Left ventricle myocardium superior (tissue), 1 donor: ENCODE measurements at regions of chr5 and their contacts with region 1.

Region 1: GRCh38 chr5:96595300-96596090 is 66.7 kb upstream of the CAST start:
- DNase-seq: no peak
- ATAC-seq: no peak

Region 2: GRCh38 chr5:96344678-96345577 is 250.6 kb before region 1 on chr5:
- intact Hi-C with region 1: loop called (anchors 5 kb)
- DNase-seq: no peak
- ATAC-seq: peak; percentile 89

Region 3: DNA sequence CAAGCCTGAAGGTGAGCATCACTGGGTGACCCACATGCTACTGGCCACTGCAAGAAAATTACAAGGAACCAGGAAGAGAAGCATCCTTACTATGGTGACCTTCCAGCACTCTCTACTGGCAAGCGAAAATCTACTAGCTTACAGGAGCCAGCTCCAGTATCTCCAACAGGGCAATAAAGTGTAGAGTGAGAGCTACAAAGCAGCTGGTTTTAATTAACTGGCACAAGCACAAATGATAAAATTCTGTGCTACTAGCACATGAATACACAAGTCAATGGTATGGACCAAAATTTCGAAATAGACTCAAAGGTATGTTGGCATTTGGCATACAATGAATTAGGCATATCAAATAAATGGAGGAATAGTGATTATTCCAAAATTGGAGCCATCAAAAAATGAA is 46.5 kb before region 1 on chr5:
- intact Hi-C with region 1: no loop called
- DNase-seq: no peak
- ATAC-seq: no peak